ENCODE measurements at regions of chr14 and their contacts with region 1.

Region 1: DNA sequence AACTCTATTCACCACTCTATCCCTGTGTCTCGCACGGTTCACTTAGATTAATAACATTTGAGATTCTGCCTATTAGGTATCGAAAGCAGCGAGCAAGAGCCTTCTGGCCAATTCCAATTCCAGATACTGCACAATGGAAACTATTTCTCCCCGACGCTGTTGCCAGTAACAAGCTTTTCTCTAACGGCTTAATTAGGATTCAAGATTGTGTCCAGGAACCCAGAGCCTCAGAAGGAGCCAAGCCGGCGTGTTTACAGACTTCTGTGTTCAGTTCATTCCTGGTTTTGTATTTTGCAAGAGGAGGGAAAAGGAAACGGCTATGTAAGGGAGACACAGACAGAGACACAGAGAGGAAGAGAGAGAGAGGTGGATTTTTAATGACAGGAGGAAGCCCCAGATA is 185.6 kb downstream of the DICER1 start:
- DNase-seq: peak in 1 of 2 donors; percentile 82
- H3K4me3 ChIP-seq: peak overlapping the region in 1 of 2 donors; percentile 25
- H3K27ac ChIP-seq: peak overlapping the region; percentile 65 to 84
- H3K4me1 ChIP-seq: peaks cover 0 to 5% of the 10 kb centered on the region in 2 donors
- H3K27me3 ChIP-seq: no peaks in the 10 kb centered on the region
- CTCF ChIP-seq: no peak

Region 2: DNA sequence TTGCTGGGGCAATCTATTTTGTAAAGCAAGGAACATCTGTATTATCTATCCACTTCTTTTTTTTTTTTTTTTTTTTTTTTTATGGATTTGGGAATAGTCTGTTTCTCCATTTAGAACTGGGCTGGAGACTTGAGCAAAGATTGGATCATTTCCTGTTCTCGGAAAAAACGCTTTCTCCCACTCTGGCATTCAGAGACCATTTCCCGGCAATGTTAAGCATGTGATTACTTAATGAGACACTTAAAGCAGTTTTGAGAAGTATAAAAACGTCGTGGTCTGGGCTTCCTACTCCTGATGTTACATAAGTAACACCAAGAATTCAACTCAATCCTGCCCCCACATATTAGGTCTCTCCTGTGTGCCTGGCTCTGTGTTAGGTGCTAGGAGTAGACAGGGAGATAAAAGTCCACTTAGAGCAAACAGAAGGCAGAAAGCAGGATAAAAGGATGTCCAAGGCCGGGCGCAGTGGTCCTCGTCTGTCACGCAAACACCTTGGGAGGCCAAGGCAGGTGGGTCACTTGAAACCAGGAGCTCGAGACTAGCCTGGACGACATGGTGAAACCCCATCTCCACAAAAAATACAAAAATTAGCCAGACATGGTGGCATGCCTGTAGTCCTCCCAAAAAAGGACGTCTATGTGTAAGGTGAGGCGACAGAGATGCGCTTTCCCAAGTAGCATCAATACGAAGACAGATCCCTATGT is 49.7 kb before region 1 on chr14:
- intact Hi-C with region 1: loop called (anchors 5 kb)
- DNase-seq: peak in 1 of 2 donors; percentile 39
- H3K4me3 ChIP-seq: no peak overlapping the region
- H3K27ac ChIP-seq: peak overlapping the region in 1 of 2 donors; percentile 18
- H3K4me1 ChIP-seq: peaks cover 0 to 3% of the 10 kb centered on the region in 2 donors
- H3K27me3 ChIP-seq: no peaks in the 10 kb centered on the region
- CTCF ChIP-seq: no peak

Region 3: GRCh38 chr14:94936401-94936892 is 35.3 kb before region 1 on chr14:
- intact Hi-C with region 1: loop called (anchors 5 kb)
- DNase-seq: peak in 1 of 2 donors; percentile 83
- H3K4me3 ChIP-seq: peak overlapping the region; percentile 40 to 59
- H3K27ac ChIP-seq: peak overlapping the region; percentile 62 to 82
- H3K4me1 ChIP-seq: peaks cover 3 to 9% of the 10 kb centered on the region in 2 donors
- H3K27me3 ChIP-seq: no peaks in the 10 kb centered on the region
- CTCF ChIP-seq: no peak